Right lobe of liver (tissue), 6 donors: ENCODE measurements at regions of chr14 and their contacts with region 1.

Region 1: DNA sequence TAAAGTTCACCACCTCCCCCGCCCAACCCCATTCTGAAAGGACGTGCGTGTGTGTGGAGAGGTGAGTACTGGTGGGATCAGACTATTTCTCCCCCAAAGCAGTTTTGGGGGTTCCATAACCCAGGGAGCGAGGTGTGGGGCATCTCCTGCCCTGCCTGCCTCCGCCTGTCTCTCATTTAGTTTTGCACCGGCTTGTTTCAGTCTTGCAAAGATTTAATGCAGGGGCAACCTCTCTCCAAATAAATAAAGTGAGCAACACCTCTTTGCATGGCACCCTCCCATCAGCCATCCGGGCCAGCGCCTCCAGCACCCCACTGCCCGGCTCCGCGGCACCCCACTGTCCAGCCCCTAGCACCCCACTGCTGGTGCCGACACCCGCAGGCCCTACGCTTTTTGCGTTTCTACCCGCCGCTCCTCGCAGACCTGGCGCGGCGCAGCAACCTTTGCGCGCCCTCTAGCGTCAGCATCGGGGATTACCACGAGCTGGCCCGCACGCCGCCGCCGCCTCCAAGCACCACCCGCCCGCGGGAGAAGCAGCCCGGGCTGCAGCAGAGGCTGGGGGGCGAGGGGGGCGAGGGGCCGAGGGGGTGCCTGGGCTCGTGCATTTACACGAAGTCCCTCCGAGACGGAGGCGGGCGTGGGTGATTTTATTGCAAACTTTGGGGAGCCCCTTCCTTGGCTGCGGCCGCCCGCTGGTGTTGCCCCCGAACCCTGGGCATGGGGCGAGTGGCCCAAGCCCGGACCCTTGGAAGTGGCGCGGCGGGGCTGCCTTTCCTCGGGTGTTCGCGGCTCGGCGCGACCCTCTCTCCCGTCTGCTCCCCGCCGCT is 55.8 kb upstream of the VRK1 start:
- DNase-seq: peak; percentile 62 to 75 (median 65)
- ATAC-seq: peak; percentile 90 to 98 (median 97)
- H3K4me3 ChIP-seq: peak overlapping the region in 2 of 3 donors; percentile 23 to 40
- H3K27ac ChIP-seq: no peak overlapping the region
- H3K4me1 ChIP-seq: peaks cover 0 to 8% (median 4%) of the 10 kb centered on the region in 4 donors
- H3K27me3 ChIP-seq: peaks cover 0 to 4% of the 10 kb centered on the region in 2 donors
- CTCF ChIP-seq: peak; percentile 77 to 93 (median 88)
- POLR2A ChIP-seq: no peak

Region 2: DNA sequence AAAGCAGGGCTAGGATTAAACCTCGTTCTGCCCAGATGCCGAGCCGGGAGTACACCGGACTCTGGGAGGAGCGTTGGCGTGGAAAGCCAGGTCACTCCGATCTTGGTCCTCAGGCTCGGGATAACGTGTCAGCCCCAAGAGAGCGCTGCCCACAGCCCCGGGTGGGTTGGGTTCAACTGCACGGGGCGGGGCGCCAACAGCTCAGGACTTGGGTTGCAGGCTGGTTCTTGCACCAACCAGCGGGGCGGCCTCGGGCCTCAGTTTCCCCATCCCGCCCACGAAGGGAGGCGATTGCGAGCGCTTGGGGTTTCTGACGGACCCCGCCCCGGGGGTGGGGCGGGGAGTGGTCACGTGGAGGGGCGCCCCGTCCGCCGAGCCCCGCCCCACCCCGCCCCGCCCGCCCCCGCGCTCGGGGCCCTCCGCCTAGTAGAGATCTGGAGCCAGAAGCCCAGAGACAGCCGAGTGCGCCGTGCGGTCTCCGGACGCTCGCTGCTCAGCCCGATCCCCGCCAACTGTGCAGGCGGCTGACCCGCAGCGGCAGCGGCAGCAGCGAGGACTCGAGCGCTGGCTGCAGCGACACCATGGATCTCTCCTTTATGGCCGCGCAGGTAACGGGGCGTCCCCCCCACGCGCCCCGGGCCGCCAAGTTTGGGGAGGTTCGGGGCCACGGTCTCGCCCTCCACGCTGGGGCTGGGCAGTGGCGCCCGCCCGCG is 702.3 kb before region 1 on chr14 and contains the start of gene C14orf132:
- intact Hi-C with region 1: no loop called
- DNase-seq: peak; percentile 81 to 88 (median 86)
- ATAC-seq: peak; percentile 91 to 96 (median 94)
- H3K4me3 ChIP-seq: peak within 1 kb of the TSS; percentile 75 to 79 (median 77)
- H3K27ac ChIP-seq: peak within 1 kb of the TSS; percentile 43 to 67 (median 54)
- H3K4me1 ChIP-seq: peaks cover 0 to 4% (median 0%) of the 10 kb centered on the region in 4 donors
- H3K27me3 ChIP-seq: no peaks in the 10 kb centered on the region
- CTCF ChIP-seq: no peak
- POLR2A ChIP-seq: peak; percentile 81
- total RNA-seq, gene C14orf132: 1.7 to 6.9 (median 3.3) TPM

Region 3: GRCh38 chr14:96567289-96567899 is 174.0 kb before region 1 on chr14:
- intact Hi-C with region 1: loop called in 1 of 2 experiments (anchors 5 kb)
- DNase-seq: no peak
- ATAC-seq: peak; percentile 50 to 65 (median 60)
- H3K4me3 ChIP-seq: no peak overlapping the region
- H3K27ac ChIP-seq: no peak overlapping the region
- H3K4me1 ChIP-seq: no peaks in the 10 kb centered on the region
- H3K27me3 ChIP-seq: no peaks in the 10 kb centered on the region
- CTCF ChIP-seq: peak; percentile 36 to 58 (median 54)
- POLR2A ChIP-seq: no peak

Region 4: DNA sequence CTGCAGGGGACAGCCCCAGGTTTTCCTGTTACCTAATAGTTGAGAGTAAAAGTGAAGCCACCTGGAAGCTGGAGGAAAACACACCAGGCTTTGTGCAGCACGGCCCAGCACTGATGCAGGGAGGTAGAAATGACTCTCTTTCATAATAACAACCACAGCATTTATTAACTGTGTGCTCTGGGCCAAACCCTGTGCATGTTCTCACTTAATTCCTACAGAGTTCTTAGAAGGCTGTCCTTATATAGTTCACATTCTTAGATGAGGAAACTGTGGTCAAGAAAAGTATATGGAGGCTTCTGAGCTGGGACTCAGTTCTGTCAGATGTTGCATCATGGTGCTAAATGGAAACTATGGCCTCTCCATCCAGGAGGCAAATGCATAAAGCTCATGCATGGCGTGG is 139.2 kb before region 1 on chr14:
- intact Hi-C with region 1: no loop called
- DNase-seq: no peak
- ATAC-seq: no peak
- H3K4me3 ChIP-seq: no peak overlapping the region
- H3K27ac ChIP-seq: no peak overlapping the region
- H3K4me1 ChIP-seq: no peaks in the 10 kb centered on the region
- H3K27me3 ChIP-seq: no peaks in the 10 kb centered on the region
- CTCF ChIP-seq: no peak
- POLR2A ChIP-seq: no peak